ENCODE measurements at regions of chr17 and their contacts with region 1.

Region 1: DNA sequence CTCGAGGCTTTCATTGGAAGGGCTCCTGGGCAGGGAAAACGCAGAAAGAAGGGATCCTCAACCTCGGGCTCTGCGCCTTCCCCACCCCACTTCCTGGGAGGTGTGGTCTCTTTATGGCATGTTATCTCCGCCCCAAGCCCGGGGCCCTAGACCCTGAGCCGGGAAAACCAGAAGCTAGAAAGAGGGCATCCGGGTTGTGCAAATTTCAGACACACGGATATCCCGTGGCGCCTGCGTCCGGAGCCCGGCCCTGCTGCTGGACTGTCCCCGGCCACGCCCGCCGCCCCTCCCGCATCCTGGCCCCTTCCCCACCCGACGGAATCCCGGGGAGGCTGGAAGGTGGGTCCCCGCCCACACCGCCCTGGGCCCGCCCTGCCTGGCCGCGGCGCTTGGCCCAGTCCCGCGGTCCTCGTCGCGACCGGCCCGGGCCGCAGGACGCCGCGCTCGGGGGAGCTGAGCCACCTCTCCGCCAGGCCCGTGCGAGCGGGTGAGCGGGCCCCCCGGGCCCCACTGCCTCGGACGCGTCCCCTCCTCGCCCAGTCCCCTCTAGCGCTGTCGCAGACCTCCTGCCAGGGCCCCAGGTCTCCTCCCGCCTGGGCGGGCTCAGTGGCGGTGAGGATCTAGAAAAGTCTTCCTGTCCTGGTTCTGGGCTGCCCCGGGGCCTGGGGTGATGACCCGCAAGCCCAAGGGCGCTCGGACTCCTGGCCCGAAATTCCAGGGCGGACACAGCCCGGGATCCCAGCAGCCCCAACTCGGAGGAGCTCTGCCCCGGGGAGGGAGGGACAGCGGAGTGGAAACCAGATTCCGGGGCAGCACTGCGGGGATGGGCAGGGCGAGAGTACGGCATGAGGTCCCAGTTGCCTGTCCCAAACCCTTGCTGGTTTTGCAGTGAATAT is at the start of gene SLC16A5:
- DNase-seq: peak; percentile 60

Region 2: DNA sequence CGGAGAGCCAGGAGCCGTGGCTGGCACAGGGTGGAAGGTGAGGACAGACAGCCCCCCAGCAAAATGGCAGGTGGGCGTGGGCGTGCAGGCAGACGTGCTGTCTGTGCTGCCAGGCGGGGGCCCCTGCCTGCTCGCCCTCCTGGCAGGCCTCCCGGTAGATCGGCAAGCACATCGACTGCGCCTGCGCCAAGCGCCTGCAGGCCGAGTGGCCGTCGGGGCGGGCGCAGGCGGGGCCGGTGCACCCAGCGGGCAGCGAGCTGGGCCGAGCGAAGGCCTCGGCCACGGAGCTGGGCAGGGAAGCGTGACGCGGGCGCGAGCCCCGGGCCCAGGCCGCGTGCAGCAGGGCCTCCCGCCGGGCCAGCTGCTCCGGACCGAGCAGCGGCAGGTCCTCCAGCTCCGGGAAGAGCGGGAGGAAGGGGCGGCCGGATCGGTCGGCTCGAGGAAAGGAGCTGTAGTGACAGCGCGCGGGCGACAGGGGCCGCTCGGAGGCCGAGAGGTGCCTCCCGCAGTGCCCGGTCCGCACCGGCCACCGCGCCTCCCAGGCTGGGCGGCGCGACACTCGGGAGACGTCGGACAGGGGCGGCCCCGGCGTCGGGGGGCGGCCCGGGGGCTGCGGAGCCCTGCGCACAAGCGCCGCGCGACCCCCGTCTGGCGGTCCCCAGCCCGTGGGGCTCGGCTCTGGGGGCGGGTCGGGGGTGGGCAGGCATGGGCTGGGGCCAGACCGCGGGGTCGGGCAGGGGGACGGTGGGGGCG is 245.0 kb before region 1 on chr17:
- CTCF ChIA-PET with region 1: no interaction called
- POLR2A ChIA-PET with region 1: no interaction called
- DNase-seq: peak; percentile 89

Region 3: DNA sequence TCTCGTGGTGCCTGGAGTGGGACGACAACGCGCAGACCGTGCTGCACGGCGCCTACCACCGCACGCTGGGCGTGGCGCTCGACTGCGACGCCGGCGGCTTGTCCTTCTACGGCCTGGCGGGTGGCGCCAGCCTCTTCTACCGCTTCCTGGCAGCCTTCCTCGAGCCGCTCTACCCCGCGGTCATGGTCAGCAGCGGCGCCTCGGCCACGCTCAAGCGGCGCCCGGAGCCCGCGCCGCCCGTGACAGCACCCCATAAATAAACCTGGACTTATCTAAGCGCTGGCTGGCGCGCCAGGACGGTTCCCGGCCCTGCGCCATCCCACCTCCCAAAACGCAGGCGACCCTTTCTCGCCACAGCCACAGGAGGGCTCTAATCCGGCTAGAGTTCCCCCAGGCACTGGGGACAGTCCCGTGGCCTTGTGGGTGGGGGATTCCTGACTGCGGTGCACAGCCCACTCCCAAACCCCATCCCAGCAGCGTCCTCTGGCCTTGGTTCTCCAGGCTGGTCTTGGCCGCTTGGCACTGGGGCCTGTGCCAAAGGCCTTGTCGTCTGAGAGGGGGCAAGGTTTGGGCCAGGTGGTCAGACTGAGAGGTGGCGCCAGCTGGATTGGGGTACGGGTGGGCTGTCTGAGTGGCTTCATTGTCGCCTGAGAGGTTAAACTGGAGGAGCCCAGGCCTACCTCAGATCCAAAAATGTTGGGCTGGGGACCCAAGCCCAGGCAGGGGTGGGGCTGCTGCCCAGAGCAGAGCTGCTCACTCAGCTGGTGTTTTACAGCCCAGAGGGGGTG is 10.1 kb before region 1 on chr17:
- CTCF ChIA-PET with region 1: interaction called, 5 read pairs
- POLR2A ChIA-PET with region 1: interaction called, 10 read pairs
- DNase-seq: no peak